ENCODE measurements at regions of chr6 and their contacts with region 1.

Region 1: GRCh38 chr6:128412680-128413079 is 107.7 kb downstream of the PTPRK start:
- DNase-seq: no peak
- ATAC-seq: no peak
- H3K4me3 ChIP-seq: no peak overlapping the region
- H3K27ac ChIP-seq: no peak overlapping the region
- H3K4me1 ChIP-seq: peaks cover 2 to 21% (median 5%) of the 10 kb centered on the region in 9 donors
- H3K27me3 ChIP-seq: no peaks in the 10 kb centered on the region
- CTCF ChIP-seq: no peak

Region 2: GRCh38 chr6:128098000-128098581 is 314.6 kb before region 1 on chr6:
- intact Hi-C with region 1: no loop called
- DNase-seq: no peak
- ATAC-seq: no peak
- H3K4me3 ChIP-seq: no peak overlapping the region
- H3K27ac ChIP-seq: no peak overlapping the region
- H3K4me1 ChIP-seq: peaks cover 0 to 27% (median 19%) of the 10 kb centered on the region in 9 donors
- H3K27me3 ChIP-seq: no peaks in the 10 kb centered on the region
- CTCF ChIP-seq: no peak

Region 3: GRCh38 chr6:128397996-128398395 is 14.7 kb before region 1 on chr6:
- intact Hi-C with region 1: loop called in 1 of 10 experiments (anchors 1 kb)
- DNase-seq: no peak
- ATAC-seq: no peak
- H3K4me3 ChIP-seq: no peak overlapping the region
- H3K27ac ChIP-seq: no peak overlapping the region
- H3K4me1 ChIP-seq: peaks cover 0 to 37% (median 11%) of the 10 kb centered on the region in 9 donors
- H3K27me3 ChIP-seq: no peaks in the 10 kb centered on the region
- CTCF ChIP-seq: no peak

Region 4: DNA sequence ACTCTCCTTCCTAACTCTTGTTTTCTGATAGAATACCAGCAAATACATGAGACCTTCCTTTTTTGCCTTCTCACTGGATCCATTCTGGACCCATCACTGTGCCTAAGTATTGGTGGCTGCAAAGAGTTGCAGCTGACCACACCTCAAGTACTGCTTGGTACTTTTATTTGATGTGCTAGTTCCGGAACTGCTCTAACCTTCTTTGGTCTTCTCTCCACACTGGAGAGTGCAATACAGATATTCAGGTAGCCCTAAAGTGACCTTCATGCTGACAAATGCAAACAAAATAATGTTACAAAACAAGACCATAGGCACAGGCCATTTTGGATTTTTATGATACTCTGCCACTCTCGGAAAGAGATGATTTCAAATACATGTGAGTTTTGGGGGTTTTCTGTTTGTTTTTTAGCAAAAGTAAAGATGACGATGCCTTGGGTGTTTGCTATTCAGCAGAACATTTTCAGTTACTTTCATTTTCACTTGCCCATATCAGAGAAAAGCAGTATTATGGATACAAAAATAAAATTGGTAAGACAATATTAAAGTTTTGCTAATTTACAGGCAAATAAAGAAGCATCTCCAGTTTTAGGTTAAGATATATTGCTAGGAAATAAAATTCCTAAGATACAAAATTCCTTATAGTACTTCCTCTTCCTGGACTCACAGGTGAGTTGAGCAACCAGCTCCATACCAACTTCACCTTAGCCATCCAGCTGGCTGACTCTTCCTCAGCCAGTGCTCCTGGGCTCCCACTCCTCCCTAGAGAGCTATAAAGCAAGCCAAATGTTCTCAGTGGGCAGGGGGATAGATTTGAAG is 65.8 kb after region 1 on chr6:
- intact Hi-C with region 1: no loop called
- DNase-seq: no peak
- ATAC-seq: peak in 2 of 8 donors; percentile 13 to 32
- H3K4me3 ChIP-seq: peak overlapping the region in 9 of 10 donors; percentile 1 to 44 (median 28)
- H3K27ac ChIP-seq: peak overlapping the region in 6 of 10 donors; percentile 3 to 40 (median 18)
- H3K4me1 ChIP-seq: peaks cover 2 to 77% (median 53%) of the 10 kb centered on the region in 9 donors
- H3K27me3 ChIP-seq: no peaks in the 10 kb centered on the region
- CTCF ChIP-seq: no peak